ENCODE measurements at regions of chr7 and their contacts with region 1.

Region 1: GRCh38 chr7:26857510-26858240 is 6.7 kb downstream of the SKAP2 start:
- DNase-seq: peak; percentile 39 to 69 (median 59)
- H3K4me3 ChIP-seq: peak overlapping the region; percentile 30 to 52 (median 39)
- H3K27ac ChIP-seq: peak overlapping the region; percentile 81 to 88 (median 86)
- H3K4me1 ChIP-seq: peaks cover 14 to 43% of the 10 kb centered on the region in 2 donors
- H3K27me3 ChIP-seq: no peaks in the 10 kb centered on the region
- CTCF ChIP-seq: peak in 1 of 6 experiments; percentile 9
- POLR2A ChIP-seq: peak in 1 of 2 donors; percentile 75

Region 2: DNA sequence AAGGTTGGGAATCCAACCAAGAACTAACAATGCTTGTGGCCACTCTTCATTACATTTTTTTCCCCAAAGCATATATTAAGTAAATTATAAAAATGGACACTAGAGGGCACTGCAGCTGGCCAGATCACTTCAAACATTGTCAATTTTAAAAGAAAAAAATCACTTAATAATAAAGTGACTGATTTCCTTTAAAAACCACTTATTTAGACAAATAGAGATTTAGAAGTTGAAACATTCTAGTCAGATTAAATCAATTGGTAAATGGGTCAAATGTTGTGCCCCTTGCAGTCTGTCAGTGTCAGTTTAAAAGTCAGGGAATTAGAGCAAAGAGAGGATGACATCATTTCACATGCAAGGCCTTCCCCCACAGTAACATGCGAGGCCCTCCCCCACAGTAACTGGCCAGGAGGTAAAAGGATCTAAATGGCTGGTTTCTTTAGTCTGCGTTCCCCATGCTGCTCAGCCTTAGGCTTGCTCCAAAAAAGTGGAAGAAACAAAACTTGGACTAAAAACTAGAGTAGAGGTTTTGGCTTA is 171.2 kb before region 1 on chr7:
- intact Hi-C with region 1: no loop called
- DNase-seq: peak; percentile 24 to 60 (median 41)
- H3K4me3 ChIP-seq: no peak overlapping the region
- H3K27ac ChIP-seq: peak overlapping the region in 2 of 5 donors; percentile 41 to 69
- H3K4me1 ChIP-seq: peaks cover 4 to 27% of the 10 kb centered on the region in 2 donors
- H3K27me3 ChIP-seq: no peaks in the 10 kb centered on the region
- CTCF ChIP-seq: peak; percentile 58 to 84 (median 74)
- POLR2A ChIP-seq: no peak

Region 3: DNA sequence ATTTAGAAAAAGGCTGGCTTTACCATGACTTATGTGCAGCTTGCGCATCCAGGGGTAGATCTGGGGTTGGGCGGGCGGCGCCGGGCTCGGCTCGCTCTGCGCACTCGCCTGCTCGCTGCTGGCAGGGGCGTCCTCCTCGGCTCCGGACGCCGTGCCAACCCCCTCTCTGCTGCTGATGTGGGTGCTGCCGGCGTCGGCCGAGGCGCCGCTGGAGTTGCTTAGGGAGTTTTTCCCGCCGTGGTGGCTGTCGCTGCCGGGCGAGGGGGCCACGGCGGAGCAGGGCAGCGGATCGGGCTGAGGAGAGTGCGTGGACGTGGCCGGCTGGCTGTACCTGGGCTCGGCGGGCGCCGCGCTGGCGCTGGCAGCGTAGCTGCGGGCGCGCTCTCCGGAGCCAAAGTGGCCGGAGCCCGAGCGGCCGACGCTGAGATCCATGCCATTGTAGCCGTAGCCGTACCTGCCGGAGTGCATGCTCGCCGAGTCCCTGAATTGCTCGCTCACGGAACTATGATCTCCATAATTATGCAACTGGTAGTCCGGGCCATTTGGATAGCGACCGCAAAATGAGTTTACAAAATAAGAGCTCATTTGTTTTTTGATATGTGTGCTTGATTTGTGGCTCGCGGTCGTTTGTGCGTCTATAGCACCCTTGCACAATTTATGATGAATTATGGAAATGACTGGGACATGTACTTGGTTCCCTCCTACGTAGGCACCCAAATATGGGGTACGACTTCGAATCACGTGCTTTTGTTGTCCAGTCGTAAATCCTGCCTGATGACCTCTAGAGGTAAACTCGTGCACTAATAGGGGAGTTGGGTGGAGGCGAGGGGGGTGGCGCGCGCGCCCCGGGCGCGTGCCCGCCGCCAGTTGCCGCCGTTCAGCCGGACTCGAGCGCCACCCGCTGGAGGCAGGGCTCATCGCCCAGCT is 285.6 kb after region 1 on chr7 and contains the start of gene HOXA5:
- intact Hi-C with region 1: loop called (anchors 5 kb)
- DNase-seq: peak; percentile 90 to 96 (median 93)
- H3K4me3 ChIP-seq: peak within 1 kb of the TSS; percentile 66 to 91 (median 76)
- H3K27ac ChIP-seq: peak within 1 kb of the TSS; percentile 94 to 99 (median 99)
- H3K4me1 ChIP-seq: peaks cover 14 to 21% of the 10 kb centered on the region in 2 donors
- H3K27me3 ChIP-seq: no peaks in the 10 kb centered on the region
- CTCF ChIP-seq: peak; percentile 71 to 96 (median 90)
- POLR2A ChIP-seq: peak; percentile 72 to 95
- total RNA-seq, gene HOXA5: 39.2 to 132 (median 64.3) TPM

Measured in adrenal gland (tissue), 19 donors.